Left cardiac atrium (tissue), 4 donors: ENCODE measurements at regions of chr5 and their contacts with region 1.

Region 1: DNA sequence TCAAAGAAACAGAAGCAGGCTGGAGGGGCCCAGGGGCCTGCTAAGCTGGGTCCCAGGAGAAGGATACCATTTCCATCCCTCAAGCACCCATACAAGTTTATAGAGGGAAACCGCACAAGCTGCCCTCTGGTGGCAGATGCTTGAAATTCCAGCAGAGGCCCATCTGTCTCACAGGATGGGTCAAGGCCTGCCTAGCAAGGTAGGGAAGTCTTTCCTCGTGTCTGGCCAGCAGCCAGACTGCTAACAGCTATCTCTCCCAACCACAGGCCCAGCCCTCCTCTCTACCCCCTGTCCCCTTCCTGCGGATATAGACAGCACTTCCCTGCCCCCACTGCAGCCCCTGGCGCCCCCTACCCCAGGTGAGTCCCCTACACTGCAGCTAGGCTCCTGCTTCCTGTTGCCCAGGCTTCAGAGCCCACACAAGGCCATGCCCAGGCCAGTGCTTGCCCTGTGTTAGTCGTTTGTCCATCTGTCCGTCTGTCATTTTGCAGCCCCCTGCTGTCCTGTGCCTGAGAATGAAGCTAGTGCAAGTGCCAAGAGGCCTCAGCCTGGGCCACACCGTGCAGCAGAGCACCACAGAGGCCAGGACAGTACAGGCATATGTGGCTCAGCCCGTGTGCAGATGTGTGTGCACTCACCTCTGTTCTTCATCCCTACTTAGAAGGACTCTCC is 26.2 kb downstream of the TCF7 start:
- DNase-seq: peak; percentile 64
- ATAC-seq: peak; percentile 69 to 71

Region 2: GRCh38 chr5:134041570-134042411 is 98.9 kb before region 1 on chr5:
- intact Hi-C with region 1: loop called (anchors 2 to 5 kb)
- DNase-seq: no peak
- ATAC-seq: no peak

Region 3: DNA sequence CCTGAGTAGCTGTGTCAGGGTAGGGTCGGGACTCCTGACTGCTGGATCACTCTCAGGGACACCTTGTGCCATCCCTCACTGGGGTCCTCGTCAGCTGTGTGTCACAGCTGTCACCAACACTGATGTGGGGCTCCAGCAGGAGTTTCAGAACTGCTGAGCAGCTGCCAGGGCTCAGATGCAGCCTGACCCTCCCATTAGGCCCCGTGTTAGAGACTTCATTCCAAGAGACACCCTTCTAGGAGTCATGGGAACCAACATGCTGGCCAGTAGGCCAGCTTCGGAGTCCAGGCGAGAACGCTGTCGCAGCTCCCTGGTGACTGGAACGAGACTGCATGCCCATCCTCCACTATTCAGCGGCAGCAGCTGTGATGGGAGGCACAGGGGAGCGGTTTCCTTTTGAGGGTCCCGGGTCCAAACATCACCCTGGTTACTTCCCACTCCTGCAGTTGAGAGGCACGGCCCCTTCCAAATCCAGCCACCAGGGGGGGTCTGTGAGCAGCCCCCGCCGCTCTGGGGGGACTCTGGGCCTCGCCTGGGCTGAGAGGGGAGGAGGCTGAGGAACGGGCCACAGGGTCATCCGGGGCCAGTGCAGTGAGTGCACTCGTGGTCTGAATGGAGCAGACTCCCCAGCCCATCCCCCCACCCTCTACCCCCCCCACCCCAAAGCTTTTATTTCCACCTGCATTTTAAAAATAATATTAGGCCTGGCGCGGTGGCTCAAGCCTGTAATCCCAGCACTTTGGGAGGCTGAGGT is 38.8 kb before region 1 on chr5:
- intact Hi-C with region 1: loop called (anchors 5 kb)
- DNase-seq: no peak
- ATAC-seq: peak; percentile 71 to 73